ENCODE measurements at regions of chr6 and their contacts with region 1.

Region 1: GRCh38 chr6:79453558-79454042 is 83.6 kb downstream of the LCA5 start:
- DNase-seq: no peak
- H3K4me3 Mint-ChIP-seq: no peak overlapping the region
- H3K27ac Mint-ChIP-seq: no peak overlapping the region
- H3K4me1 Mint-ChIP-seq: no peaks in the 10 kb centered on the region
- H3K27me3 Mint-ChIP-seq: peaks cover 10% of the 10 kb centered on the region

Region 2: DNA sequence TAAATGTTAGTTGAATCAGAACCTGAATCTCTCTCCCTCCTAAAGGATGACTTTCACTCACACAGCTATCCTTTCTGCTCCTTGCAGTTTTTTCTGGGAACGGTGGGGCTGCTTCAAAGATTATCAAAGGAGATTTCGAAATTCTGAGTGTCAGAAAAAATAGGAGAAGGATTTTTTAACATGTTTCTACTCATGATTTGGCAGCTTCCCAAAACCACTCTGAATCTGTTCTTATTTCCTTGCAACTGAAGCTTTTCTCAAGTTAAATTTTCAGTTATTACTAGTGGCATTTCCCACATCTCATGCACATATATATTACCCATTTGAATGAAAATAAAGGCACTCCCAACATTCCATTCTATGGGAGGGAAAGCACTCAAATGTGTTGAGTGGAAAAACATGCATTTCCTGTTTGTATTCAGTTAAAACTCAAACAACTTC is 40.0 kb before region 1 on chr6:
- CTCF ChIA-PET with region 1: no interaction called
- intact Hi-C with region 1: loop called (anchors 2 kb)
- DNase-seq: no peak
- H3K4me3 Mint-ChIP-seq: no peak overlapping the region
- H3K27ac Mint-ChIP-seq: no peak overlapping the region
- H3K4me1 Mint-ChIP-seq: no peaks in the 10 kb centered on the region
- H3K27me3 Mint-ChIP-seq: no peaks in the 10 kb centered on the region

Measured in activated naive CD4-positive, alpha-beta T cell treated with anti-CD3 and anti-CD28 coated beads for 36 hours (primary cell).